ENCODE measurements at regions of chr5 and their contacts with region 1.

Region 1: DNA sequence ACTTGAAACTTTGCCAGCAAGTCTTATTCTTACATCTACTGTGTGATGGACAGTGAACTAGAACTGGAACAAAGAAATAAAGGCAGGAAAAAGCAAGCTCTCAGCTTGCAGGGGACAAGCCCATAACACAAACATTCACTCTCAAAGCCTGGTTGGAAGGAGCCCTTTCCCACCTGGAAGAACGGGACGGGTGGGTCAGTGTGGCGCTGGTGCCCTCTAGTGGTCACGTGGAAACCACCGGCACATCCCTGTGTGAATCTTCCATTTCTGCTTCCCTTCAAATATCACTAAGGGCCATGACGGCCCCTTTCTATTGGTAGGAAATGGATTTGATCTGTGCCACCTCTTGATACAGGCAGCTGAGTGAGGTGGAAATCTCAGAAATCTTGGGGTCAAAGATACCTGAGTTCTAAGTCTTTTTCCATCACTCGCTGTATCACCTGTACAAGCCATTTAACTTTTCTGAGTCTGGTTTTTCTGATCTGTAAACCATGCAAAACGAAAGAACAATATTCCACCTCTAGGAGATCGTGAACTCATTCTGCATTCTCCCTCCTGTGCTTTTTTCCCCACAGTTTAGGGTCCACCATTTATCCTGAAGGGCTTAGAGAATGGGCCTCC is 211.6 kb downstream of the MSX2 start:
- DNase-seq: peak; percentile 33 to 95 (median 76)

Region 2: GRCh38 chr5:174837919-174838902 is 97.8 kb before region 1 on chr5:
- intact Hi-C with region 1: loop called (anchors 5 kb)
- DNase-seq: peak in 5 of 10 donors; percentile 12 to 44 (median 25)

Region 3: DNA sequence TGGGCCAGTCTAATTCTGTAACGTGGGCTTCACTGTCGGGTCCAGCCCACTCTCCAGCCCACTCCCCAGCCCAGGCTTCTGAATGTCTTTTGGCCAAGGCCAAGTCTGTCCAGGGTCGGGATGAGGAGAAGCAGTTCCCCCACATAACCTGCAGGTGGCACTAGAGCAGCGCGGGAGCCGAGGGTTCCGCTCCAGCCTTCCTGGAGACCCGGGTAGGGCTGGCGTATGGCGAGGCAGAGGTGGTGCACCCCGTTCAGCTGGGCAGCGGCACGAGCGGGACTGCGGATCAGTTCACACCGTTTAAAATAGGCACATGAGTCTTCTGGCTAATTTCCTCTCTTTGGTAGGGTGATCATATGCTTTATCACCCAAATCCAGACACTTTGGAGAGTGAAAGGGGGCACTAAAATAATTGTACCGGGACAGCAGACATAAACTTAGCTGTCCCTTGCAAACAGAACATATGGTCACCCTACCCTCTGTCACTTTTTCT is 25.7 kb before region 1 on chr5:
- intact Hi-C with region 1: loop called (anchors 1 kb)
- DNase-seq: peak; percentile 52 to 96 (median 81)

Region 4: GRCh38 chr5:175243441-175243840 is 307.5 kb after region 1 on chr5:
- intact Hi-C with region 1: no loop called
- DNase-seq: no peak